Gastrocnemius medialis (tissue), 4 donors: ENCODE measurements at regions of chr15 and their contacts with region 1.

Region 1: DNA sequence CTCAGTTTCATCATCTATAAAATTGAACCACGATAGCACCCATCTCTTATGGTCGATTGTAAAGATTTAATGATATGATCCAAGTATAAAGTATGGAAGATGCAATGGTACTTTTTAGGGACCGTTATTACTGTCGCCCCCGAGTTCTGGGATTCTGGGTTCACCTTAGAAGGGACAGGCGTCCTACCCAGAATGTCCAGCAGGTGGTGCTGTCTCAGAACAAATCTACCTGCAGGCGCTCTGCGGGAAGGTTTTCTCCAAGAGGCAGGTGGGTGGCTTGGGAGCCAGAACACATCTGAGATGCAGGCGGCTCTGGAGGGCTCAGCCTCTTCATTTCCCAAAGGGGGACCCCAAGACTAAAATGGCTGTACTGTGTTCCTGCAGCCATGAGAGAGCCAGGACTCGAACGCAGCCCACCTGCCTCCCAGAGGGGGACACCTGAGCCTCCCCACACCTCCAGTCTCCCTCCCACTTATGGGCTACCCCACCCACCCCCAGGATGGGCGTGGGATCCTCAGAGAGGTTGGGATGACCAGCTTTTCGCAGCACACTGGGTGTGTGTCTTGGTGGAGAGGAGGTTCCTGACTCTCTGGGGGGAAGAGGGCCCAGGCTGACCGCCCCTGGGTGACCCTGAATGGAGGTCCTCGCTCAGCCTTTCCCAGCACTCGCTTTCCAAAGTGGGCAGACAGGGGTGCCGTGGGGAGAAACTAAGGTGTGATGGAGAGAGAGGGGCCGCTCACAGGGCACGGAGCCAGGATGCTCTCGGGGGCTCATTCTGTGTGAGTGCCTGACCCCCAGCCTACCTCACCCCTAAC is 28.1 kb upstream of the CORO2B start:
- DNase-seq: peak; percentile 39 to 52
- ATAC-seq: peak; percentile 55 to 72
- H3K4me3 ChIP-seq: no peak overlapping the region
- H3K27ac ChIP-seq: no peak overlapping the region
- H3K4me1 ChIP-seq: no peaks in the 10 kb centered on the region
- H3K27me3 ChIP-seq: no peaks in the 10 kb centered on the region
- CTCF ChIP-seq: peak; percentile 61 to 93 (median 84)
- POLR2A ChIP-seq: no peak

Region 2: DNA sequence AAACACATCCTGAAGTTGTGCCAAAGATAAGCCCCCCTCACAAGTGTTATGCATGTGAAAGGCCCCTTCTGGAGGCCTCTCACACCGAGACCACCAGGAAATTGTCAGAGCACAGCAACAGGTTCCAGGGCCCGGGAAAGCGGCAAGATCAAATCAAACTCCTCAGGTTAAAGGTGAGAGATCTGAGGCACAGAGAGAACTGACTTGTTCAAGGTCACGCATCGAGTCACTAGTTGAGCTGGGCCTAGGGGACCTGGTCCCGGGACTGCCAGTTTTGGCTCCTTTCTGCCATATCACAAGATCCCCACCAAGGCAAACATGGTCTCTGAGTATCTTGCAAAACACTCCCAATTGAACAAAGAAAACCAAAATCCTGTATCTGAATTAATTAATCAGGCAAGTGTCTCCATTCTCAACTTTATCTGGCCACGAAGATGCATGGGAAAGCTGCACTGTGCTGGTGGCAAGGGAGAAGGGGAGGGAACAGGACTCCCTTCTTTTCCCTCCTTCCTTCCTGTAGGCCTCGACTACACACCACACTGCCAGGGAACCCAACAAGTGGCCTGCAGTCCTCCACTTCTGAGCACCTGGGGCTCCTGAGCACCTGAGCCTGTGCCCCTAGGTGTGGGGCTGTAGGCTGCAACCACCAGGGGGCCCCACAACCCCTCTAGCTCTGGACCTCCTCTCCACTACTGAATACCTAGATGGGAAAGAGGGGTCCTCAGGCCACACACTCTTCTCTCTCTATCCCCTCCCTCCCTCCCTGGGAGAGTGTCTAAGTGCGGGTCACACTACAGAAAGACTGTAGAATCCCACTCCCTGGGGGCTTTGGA is 232.8 kb after region 1 on chr15:
- in situ Hi-C with region 1: no loop called
- intact Hi-C with region 1: loop called (anchors 5 kb)
- DNase-seq: peak in 1 of 2 donors; percentile 38
- ATAC-seq: peak; percentile 36 to 53
- H3K4me3 ChIP-seq: no peak overlapping the region
- H3K27ac ChIP-seq: no peak overlapping the region
- H3K4me1 ChIP-seq: peaks cover 0 to 7% of the 10 kb centered on the region in 2 donors
- H3K27me3 ChIP-seq: no peaks in the 10 kb centered on the region
- CTCF ChIP-seq: peak; percentile 63 to 87 (median 78)
- POLR2A ChIP-seq: no peak

Region 3: DNA sequence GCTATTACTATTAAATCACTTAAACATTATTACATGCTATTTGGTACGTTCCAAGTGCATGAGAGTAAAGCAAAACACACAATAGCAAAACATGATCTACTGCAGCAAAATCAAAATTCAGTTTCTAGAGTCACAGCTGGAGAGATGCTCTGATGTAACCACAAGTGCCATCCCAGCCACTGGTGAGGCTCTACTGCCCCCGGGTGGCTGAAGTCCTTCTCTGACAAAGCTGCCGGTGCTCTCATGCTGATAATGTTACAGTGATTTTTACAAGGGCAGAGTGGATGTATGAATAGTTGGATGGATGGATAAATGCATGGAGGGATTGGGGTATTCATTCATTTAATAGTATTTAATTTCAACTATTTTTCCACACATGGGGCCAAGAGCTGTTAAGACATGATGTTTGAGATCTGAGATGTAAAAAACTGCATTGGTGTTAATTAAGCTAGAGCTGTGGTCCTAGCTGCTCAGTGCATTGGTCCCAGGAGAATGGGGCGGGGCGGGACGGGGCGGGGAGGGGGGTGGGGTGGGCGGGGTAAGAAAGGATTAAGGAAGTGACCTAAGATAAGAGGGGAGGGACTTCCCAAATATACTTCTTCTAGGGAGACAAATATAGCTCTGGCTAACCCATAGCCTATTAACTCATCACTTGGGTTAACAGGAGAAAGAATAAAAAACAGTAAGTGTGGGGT is 374.3 kb after region 1 on chr15:
- in situ Hi-C with region 1: no loop called
- intact Hi-C with region 1: loop called (anchors 5 kb)
- DNase-seq: peak; percentile 8 to 21
- ATAC-seq: peak; percentile 52 to 55
- H3K4me3 ChIP-seq: no peak overlapping the region
- H3K27ac ChIP-seq: no peak overlapping the region
- H3K4me1 ChIP-seq: no peaks in the 10 kb centered on the region
- H3K27me3 ChIP-seq: no peaks in the 10 kb centered on the region
- CTCF ChIP-seq: peak in 4 of 5 experiments; percentile 44 to 69 (median 62)
- POLR2A ChIP-seq: no peak